Activated CD8-positive, alpha-beta T cell treated with anti-CD3 and anti-CD28 coated beads for 36 hours (primary cell): ENCODE measurements at regions of chr10 and their contacts with region 1.

Region 1: DNA sequence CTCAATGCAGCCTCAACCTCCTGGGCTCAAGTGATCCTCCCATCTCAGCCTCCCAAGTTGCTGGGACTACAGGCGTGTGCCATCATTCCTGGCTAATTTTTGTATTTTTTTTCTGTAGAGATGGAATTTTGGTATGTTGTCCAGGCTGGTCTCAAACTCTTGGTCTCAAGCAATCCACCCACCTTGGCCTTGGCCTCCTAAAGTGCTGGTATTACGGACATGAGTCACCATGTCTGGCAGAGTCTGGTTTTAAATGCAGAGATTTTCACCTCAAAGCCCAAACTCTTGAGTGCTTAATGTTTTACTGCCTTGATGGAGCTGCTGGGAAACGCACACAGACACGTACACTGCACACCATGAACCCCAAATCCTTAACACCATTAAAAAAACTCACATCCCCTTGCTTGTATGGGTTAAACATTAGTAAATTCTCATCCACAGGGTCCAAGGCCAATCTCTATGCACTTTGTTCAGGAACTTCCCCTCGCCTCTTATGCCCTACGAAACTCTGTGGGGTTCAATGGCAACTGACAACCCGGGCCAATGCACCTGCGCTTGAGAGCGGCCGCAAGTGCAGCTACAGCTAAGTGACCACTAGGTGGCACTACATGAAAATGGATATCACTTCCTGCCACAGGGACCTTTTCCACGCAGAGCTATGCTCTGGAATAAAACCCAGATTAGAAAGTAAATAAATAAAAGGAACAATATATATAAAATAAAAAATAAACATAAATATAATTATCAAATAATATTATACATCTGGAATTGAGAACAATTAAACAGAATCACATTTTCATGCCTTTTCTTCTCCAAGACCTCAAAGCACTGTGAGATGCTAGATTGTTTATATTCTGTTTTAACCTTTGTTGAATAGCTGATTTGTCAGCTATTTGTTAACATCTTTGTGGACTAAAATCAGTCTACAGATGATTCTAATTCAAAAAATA is 66.9 kb upstream of the AFAP1L2 start:
- DNase-seq: peak; percentile 72
- ATAC-seq: peak; percentile 89
- H3K4me3 Mint-ChIP-seq: no peak overlapping the region
- H3K27ac Mint-ChIP-seq: peak overlapping the region; percentile 65
- H3K4me1 Mint-ChIP-seq: peaks cover 23% of the 10 kb centered on the region
- H3K27me3 Mint-ChIP-seq: no peaks in the 10 kb centered on the region
- CTCF ChIP-seq: peak; percentile 97

Region 2: DNA sequence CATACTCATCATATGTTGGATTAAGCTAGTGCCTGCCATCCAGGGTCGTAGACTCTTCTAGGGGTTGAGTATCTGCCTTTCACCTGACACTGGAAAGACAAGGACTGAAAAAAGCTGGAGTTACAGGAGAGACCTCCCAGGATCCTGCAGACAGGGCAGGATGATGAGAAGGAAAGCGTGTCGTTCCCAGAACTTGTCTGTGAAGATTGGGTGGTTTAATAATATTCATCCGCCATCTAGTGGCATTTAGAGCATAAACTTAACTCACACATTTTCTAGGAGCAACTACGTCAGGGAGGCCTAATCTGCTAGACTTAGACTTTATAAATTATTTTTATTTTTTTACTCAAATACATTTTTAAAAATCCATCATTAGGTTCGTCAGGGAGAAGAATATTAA is 367.9 kb before region 1 on chr10:
- CTCF ChIA-PET with region 1: no interaction called
- POLR2A ChIA-PET with region 1: no interaction called
- intact Hi-C with region 1: no loop called
- DNase-seq: no peak
- ATAC-seq: peak; percentile 48
- H3K4me3 Mint-ChIP-seq: no peak overlapping the region
- H3K27ac Mint-ChIP-seq: no peak overlapping the region
- H3K4me1 Mint-ChIP-seq: peaks cover 31% of the 10 kb centered on the region
- H3K27me3 Mint-ChIP-seq: peaks cover 29% of the 10 kb centered on the region
- CTCF ChIP-seq: peak; percentile 55

Region 3: GRCh38 chr10:114261116-114261515 is 210.1 kb before region 1 on chr10:
- CTCF ChIA-PET with region 1: no interaction called
- POLR2A ChIA-PET with region 1: no interaction called
- intact Hi-C with region 1: no loop called
- DNase-seq: no peak
- ATAC-seq: no peak
- H3K4me3 Mint-ChIP-seq: no peak overlapping the region
- H3K27ac Mint-ChIP-seq: no peak overlapping the region
- H3K4me1 Mint-ChIP-seq: peaks cover 7% of the 10 kb centered on the region
- H3K27me3 Mint-ChIP-seq: no peaks in the 10 kb centered on the region
- CTCF ChIP-seq: no peak

Region 4: GRCh38 chr10:114458955-114459354 is 12.3 kb before region 1 on chr10:
- CTCF ChIA-PET with region 1: interaction called, 17 read pairs
- POLR2A ChIA-PET with region 1: interaction called, 3 read pairs
- intact Hi-C with region 1: no loop called
- DNase-seq: peak; percentile 70
- ATAC-seq: peak; percentile 74
- H3K4me3 Mint-ChIP-seq: no peak overlapping the region
- H3K27ac Mint-ChIP-seq: peak overlapping the region; percentile 36
- H3K4me1 Mint-ChIP-seq: peaks cover 22% of the 10 kb centered on the region
- H3K27me3 Mint-ChIP-seq: no peaks in the 10 kb centered on the region
- CTCF ChIP-seq: peak; percentile 43

Region 5: DNA sequence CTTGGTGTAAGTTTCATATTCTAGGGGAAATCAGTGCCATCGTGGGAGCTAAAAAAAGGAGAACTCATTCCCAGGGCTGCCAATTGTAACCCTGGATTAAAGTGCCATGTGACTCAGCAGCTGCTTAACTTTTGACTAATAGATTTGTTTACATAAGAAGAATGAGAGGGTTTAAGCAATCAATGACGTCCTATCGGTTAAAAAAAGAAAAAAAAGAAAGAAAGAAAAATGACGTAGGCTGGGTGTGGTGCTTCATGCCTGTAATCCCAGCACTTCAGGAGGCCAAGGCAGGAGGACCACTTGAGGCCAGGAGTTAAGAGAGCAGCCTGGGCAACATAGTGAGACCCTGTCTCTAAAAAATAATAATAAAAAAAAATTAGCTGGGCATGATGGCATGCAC is 49.2 kb after region 1 on chr10:
- CTCF ChIA-PET with region 1: interaction called, 55 read pairs
- POLR2A ChIA-PET with region 1: interaction called, 6 read pairs
- intact Hi-C with region 1: no loop called
- DNase-seq: no peak
- ATAC-seq: peak; percentile 1
- H3K4me3 Mint-ChIP-seq: peak overlapping the region; percentile 59
- H3K27ac Mint-ChIP-seq: peak overlapping the region; percentile 91
- H3K4me1 Mint-ChIP-seq: peaks cover 91% of the 10 kb centered on the region
- H3K27me3 Mint-ChIP-seq: no peaks in the 10 kb centered on the region
- CTCF ChIP-seq: no peak

Region 6: DNA sequence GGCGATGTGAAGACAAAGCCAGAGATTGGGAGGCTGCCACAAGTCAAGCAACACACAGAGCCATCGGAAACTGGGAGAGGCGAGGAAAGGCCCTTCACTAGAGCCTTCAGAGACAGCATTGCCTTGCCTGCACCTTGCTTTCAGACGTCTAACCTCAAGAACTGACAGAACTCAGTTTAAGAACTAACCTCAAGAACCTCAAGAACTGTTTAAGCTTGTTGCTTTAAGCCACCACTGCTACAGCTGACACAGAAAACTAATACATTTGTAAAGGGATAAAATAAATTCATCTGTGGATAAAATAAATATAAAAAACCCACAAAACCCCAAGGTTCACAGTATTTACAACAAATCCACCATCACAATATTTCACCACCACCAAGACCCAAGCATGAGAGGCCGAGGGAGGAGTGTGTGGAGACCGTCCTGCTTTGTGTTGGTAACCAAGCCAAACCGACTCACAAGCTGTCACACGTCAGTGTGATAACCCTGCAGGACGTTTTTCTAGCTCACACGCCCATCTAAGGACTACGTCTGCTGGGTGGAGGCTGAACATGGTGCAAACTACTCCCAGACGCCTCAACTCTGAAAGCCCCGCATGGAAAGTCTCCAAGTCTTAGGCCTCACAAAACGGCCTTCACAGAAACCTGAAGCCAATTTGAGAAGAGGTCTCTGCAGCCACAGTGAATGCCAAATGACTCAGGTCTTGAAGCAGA is 70.0 kb after region 1 on chr10:
- CTCF ChIA-PET with region 1: interaction called, 133 read pairs
- POLR2A ChIA-PET with region 1: interaction called, 4 read pairs
- intact Hi-C with region 1: no loop called
- DNase-seq: peak; percentile 89
- ATAC-seq: peak; percentile 83
- H3K4me3 Mint-ChIP-seq: peak overlapping the region; percentile 70
- H3K27ac Mint-ChIP-seq: peak overlapping the region; percentile 100
- H3K4me1 Mint-ChIP-seq: peaks cover 87% of the 10 kb centered on the region
- H3K27me3 Mint-ChIP-seq: no peaks in the 10 kb centered on the region
- CTCF ChIP-seq: no peak

Region 7: GRCh38 chr10:114694752-114695151 is 223.5 kb after region 1 on chr10:
- CTCF ChIA-PET with region 1: interaction called, 8 read pairs
- POLR2A ChIA-PET with region 1: no interaction called
- intact Hi-C with region 1: loop called (anchors 10 kb)
- DNase-seq: peak; percentile 50
- ATAC-seq: peak; percentile 49
- H3K4me3 Mint-ChIP-seq: no peak overlapping the region
- H3K27ac Mint-ChIP-seq: no peak overlapping the region
- H3K4me1 Mint-ChIP-seq: peaks cover 9% of the 10 kb centered on the region
- H3K27me3 Mint-ChIP-seq: peaks cover 2% of the 10 kb centered on the region
- CTCF ChIP-seq: peak; percentile 75